Endothelial cell of umbilical vein (primary cell): ENCODE measurements at regions of chr7 and their contacts with region 1.

Region 1: GRCh38 chr7:100705753-100706671 is at the start of gene POP7:
- DNase-seq: peak; percentile 98
- H3K4me3 ChIP-seq: peak within 1 kb of the TSS; percentile 54 to 85 (median 65)
- H3K27ac ChIP-seq: peak within 1 kb of the TSS; percentile 49
- H3K4me1 ChIP-seq: peaks cover 12% of the 10 kb centered on the region
- H3K27me3 ChIP-seq: peaks cover 1 to 2% of the 10 kb centered on the region in 2 experiments
- CTCF ChIP-seq: no peak
- POLR2A ChIP-seq: peak; percentile 69
- total RNA-seq, gene POP7: 47.4 and 48.0 TPM in 2 replicates

Region 2: GRCh38 chr7:100396421-100396982 is 309.5 kb before region 1 on chr7:
- CTCF ChIA-PET with region 1: no interaction called
- POLR2A ChIA-PET with region 1: no interaction called
- dilution Hi-C with region 1: no loop called
- intact Hi-C with region 1: no loop called
- DNase-seq: no peak
- H3K4me3 ChIP-seq: no peak overlapping the region
- H3K27ac ChIP-seq: no peak overlapping the region
- H3K4me1 ChIP-seq: no peaks in the 10 kb centered on the region
- H3K27me3 ChIP-seq: peaks cover 3 to 14% of the 10 kb centered on the region in 2 experiments
- CTCF ChIP-seq: no peak
- POLR2A ChIP-seq: no peak

Region 3: DNA sequence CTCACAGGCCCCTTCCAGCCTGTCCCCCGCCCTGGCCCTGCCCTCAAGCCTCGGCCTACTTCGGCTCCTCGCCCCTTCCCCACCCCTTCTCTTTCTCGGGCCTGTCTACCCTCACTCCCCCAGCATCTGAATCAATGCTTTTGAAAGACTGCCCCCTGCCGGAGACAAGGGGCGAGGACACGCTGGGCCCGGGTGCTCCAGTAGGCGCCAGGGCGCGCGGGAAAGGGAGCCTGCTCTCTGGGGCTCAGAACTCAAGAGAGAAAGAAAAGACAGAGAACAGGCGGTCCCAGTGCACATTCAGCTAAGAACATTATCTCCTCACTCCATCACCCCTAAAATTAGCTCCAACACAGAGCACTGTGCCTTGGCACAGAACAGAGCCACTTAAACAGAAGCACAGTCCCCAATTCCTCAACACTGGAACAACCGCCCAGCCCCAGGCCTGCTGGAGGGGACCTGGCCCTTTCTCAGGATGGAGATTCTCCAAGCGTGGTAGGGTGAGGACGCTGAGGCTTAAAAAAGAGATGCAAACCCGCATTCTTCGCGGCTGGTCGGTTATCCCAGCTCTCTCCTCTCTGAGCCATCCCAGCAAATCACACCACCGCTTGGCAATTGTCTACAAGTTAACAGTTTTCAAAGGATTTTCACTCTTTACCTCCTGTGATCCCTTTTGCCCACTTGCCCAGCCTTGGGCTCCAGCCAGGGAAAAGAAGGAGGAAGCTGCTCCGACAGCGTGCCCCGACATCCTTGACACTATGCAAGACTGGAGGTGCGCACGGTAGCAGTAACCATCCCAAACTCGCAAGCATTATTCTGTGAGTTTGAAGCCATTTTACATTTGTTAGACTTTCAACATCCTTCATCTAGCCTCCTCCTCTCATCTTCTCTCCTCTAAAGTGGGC is 14.1 kb before region 1 on chr7:
- CTCF ChIA-PET with region 1: interaction called, 76 read pairs
- POLR2A ChIA-PET with region 1: interaction called, 6 read pairs
- dilution Hi-C with region 1: no loop called
- intact Hi-C with region 1: loop called (anchors 1 kb)
- DNase-seq: peak; percentile 65
- H3K4me3 ChIP-seq: peak overlapping the region in 1 of 3 experiments; percentile 65
- H3K27ac ChIP-seq: no peak overlapping the region
- H3K4me1 ChIP-seq: peaks cover 16% of the 10 kb centered on the region
- H3K27me3 ChIP-seq: no peaks in the 10 kb centered on the region
- CTCF ChIP-seq: peak; percentile 86 to 89
- POLR2A ChIP-seq: no peak

Region 4: GRCh38 chr7:100803398-100804233 is 97.6 kb after region 1 on chr7:
- CTCF ChIA-PET with region 1: interaction called, 36 read pairs
- POLR2A ChIA-PET with region 1: no interaction called
- dilution Hi-C with region 1: no loop called
- intact Hi-C with region 1: loop called (anchors 1 kb)
- DNase-seq: peak; percentile 65
- H3K4me3 ChIP-seq: no peak overlapping the region
- H3K27ac ChIP-seq: no peak overlapping the region
- H3K4me1 ChIP-seq: peaks cover 44% of the 10 kb centered on the region
- H3K27me3 ChIP-seq: no peaks in the 10 kb centered on the region
- CTCF ChIP-seq: no peak
- POLR2A ChIP-seq: no peak

Region 5: DNA sequence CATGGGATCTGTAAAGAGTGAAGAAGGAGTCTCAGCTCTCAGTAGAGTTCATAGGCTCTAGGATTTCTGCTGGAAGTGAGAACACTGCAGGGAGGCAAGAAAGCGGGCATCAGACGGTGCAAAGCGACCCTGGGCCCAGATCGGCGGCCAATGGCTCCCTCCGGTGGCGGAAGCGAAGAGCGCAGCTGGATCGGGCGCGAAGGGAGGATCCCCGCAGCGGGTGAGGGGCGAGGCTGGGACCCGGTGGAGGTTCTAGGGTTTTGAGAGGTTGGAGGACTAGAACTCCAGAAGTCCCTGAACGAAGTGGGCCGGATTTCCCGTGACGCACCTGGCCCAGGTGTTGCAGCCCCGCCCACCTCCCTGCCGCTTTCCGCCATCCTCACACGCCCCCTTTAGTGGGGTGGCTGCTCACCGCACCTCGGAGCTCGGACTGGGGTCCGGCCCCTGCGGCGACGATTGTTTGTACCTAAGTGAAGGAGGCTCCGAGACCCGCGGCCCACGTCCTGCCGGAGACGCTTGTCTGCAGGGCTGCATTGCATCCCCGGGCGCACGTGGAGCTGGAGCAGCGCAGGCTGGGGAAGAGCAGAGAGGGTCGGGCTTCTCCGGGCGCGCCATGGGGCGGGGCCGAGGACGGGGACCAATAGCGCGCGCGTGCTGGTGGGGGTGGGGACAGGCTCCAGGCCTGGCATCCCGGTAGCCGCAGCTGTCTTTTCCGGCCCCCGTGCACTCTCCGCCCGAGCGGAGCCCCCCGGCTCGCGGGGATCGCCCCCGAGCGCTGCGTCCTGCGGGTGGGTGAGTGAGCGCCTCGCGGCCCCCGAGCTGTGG is 146.2 kb after region 1 on chr7 and contains the start of gene SLC12A9:
- CTCF ChIA-PET with region 1: interaction called, 134 read pairs
- POLR2A ChIA-PET with region 1: no interaction called
- dilution Hi-C with region 1: loop called (anchors 25 kb)
- intact Hi-C with region 1: loop called (anchors 1 kb)
- DNase-seq: peak; percentile 84
- H3K4me3 ChIP-seq: peak within 1 kb of the TSS; percentile 67 to 80 (median 79)
- H3K27ac ChIP-seq: no peak within 1 kb of the TSS
- H3K4me1 ChIP-seq: peaks cover 14% of the 10 kb centered on the region
- H3K27me3 ChIP-seq: no peaks in the 10 kb centered on the region
- CTCF ChIP-seq: peak; percentile 94 to 95
- POLR2A ChIP-seq: peak; percentile 62
- total RNA-seq, gene SLC12A9: 30.1 and 35.0 TPM in 2 replicates

Region 6: DNA sequence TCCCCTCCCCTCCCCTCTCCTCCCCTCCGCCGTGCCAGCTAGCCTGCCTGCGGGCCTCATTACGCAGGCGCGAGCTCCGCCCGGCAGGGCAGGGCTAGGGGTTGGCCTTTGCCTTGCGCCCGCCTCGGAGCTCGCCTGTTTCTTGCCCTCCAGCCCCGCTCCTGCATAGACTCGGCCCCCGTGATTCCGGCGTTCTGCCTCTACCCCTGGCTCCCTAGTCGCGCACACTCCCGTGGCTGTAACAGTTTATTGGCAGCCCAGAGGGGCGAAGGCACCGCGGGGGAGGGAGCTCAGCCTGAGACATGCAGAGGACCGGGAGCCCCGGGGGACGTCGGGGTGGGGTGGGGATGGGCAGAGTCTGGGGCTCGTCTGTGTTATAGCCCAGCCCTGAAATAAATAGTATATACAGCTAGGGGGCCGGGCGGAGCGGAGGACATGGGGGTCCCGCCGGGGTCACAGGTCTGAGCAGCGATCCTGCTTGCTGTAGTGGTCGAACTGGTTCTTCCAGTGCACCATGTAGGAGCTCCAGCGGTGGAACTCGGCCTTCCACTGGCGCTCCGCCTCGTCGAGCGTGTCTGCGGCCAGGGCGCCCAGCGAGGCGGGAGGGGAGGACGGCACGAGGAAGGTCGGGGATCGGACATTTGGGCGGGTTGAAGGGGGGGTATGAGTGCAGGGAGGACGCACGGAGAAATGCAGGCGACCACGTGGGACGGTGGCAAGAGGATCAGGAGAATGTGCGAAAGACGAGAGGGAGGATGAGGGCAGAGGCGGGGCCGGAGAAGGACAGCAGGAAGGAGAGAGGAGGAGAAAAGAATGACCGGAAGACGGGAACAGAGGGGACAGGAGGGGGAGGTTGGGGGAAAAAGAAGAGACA is 184.0 kb after region 1 on chr7:
- CTCF ChIA-PET with region 1: interaction called, 13 read pairs
- POLR2A ChIA-PET with region 1: interaction called, 6 read pairs
- dilution Hi-C with region 1: no loop called
- intact Hi-C with region 1: no loop called
- DNase-seq: peak; percentile 88
- H3K4me3 ChIP-seq: peak overlapping the region; percentile 15 to 38 (median 37)
- H3K27ac ChIP-seq: no peak overlapping the region
- H3K4me1 ChIP-seq: peaks cover 40% of the 10 kb centered on the region
- H3K27me3 ChIP-seq: peaks cover 0 to 2% of the 10 kb centered on the region in 2 experiments
- CTCF ChIP-seq: no peak
- POLR2A ChIP-seq: no peak

Region 7: DNA sequence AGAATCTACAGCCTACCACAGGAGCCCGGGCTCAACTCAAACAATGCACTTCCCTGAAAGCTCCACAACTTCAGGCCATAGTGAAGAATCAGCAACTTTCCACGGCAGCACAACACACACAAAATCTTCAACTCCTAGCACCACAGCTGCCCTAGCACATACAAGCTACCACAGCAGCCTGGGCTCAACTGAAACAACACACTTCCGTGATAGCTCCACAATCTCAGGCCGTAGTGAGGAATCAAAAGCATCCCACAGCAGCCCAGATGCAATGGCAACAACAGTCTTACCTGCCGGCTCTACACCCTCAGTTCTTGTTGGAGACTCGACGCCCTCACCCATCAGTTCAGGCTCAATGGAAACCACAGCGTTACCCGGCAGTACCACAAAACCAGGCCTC is 285.6 kb after region 1 on chr7:
- CTCF ChIA-PET with region 1: no interaction called
- POLR2A ChIA-PET with region 1: no interaction called
- dilution Hi-C with region 1: no loop called
- intact Hi-C with region 1: no loop called
- DNase-seq: no peak
- H3K4me3 ChIP-seq: no peak overlapping the region
- H3K27ac ChIP-seq: no peak overlapping the region
- H3K4me1 ChIP-seq: no peaks in the 10 kb centered on the region
- H3K27me3 ChIP-seq: no peaks in the 10 kb centered on the region
- CTCF ChIP-seq: no peak
- POLR2A ChIP-seq: no peak